Activated CD4-positive, alpha-beta T cell treated with anti-CD3 and anti-CD28 coated beads, Interleukin-2, amount 10 ng/mL, durations not matched to agents 24 days and 14 days (primary cell): ENCODE measurements at regions of chr1 and their contacts with region 1.

Region 1: DNA sequence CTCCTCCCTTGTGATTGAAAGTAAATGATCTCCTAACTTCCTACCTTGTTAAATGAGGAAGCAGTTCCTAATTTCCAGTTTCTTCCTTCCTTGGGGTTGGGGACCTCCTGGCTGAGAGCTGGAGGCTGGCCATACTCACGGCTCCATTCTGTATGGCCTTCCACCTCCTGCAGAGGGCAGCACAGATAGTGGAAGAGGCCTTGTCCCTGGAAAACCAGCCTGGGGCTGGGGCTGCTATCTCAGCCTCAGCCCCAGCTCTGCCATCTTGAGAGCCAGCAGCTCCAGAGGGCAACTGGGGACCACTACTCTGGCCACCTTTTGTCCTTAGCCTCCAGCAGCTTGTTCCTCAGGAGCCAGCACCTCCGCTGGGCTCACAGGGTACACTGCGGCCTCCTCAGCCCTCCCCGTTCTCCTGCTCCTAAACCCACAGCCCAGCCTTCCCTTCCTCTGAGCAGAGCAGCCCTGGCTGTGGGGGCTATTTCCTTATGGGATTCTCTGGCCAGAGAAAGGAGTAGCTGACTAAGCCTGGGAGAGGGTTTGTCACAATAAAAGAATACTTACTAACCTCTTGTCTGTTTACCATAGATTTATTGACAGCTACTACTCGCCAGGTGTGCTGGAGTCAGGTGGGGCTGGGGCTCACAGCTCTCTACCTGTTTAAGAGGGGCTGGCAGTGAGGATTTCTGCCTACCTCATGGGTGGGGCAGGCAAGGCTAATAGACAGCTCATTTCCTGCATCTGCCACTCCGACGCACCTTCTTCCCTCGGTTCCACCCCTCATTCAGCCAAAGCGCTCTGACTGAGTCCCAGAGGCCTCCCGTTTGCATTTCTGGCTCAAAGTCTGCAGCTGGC is 6.3 kb downstream of the TMEM234 start:
- DNase-seq: peak; percentile 90
- H3K4me3 Mint-ChIP-seq: no peak overlapping the region
- H3K27ac Mint-ChIP-seq: peak overlapping the region; percentile 49
- H3K4me1 Mint-ChIP-seq: peaks cover 19% of the 10 kb centered on the region
- H3K27me3 Mint-ChIP-seq: no peaks in the 10 kb centered on the region

Region 2: DNA sequence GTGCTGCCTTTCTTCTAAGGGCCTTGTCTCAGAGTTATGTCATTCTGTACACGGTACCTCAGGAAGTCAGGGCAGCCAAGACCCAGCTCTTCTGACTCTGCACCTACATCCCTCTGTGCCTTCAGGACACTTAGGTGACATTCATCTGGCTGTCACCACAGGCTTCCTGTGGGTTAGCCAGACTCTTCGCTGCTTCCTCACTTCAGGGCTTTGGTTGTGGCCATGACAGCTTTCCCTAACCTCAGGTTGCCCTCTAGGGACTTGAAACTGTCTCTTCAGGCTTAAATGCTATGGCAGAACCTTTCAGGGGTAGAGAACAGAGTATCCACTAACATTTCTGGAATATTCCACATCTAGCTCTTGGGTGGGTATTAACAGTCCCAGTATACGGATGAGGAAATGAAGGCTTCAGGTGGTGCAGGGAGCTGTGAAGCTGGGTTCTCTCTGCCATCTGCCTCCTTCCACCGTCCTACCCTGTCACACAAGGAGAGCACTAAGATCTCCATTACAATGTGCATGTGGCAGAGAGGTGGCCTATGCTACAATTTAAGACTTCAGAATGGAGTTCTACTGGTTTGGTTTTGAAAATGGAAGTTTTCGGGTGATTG is 156.4 kb after region 1 on chr1:
- intact Hi-C with region 1: loop called (anchors 1 kb)
- DNase-seq: peak; percentile 91
- H3K4me3 Mint-ChIP-seq: no peak overlapping the region
- H3K27ac Mint-ChIP-seq: peak overlapping the region; percentile 60
- H3K4me1 Mint-ChIP-seq: peaks cover 19% of the 10 kb centered on the region
- H3K27me3 Mint-ChIP-seq: no peaks in the 10 kb centered on the region

Region 3: DNA sequence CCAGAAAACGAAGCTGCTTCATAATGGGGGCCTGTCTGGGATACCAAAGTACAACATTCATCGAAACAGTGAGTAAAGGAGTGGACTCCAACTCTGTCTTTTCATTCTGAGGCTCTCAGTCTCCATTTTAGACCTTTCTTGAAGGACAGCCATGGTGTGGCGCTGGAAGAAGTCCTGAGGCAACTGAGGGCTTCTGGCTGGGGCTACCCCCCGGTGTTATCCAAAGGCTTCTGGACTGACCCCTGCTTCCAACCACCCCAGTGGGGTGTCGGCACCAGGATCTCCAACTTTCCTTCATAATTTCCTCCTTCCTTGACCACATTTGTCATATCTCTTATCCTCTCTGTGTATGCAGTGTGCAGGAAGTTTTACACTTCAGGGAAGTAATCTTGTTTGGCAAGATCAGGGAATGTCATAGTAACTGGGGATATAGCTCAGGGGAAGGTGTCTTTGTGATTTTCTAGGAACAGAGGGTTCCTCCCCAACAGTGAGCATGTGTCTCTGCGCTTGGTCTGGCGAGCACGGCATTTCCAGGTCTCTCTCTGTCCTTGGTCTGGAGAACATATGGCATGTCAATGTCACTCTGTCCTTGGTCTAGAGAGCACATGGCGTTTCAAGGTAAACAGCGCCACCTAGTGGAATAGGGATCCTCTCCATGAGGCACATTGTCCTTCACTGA is 197.8 kb after region 1 on chr1:
- intact Hi-C with region 1: loop called (anchors 2 kb)
- DNase-seq: peak; percentile 93
- H3K4me3 Mint-ChIP-seq: no peak overlapping the region
- H3K27ac Mint-ChIP-seq: peak overlapping the region; percentile 10
- H3K4me1 Mint-ChIP-seq: peaks cover 3% of the 10 kb centered on the region
- H3K27me3 Mint-ChIP-seq: peaks cover 26% of the 10 kb centered on the region